ENCODE measurements at regions of chr14 and their contacts with region 1.

Region 1: GRCh38 chr14:21703357-21704326 is 30.0 kb upstream of the OR4E1 start:
- DNase-seq: no peak
- ATAC-seq: peak; percentile 94
- H3K4me3 Mint-ChIP-seq: no peak overlapping the region
- H3K27ac Mint-ChIP-seq: peak overlapping the region; percentile 52
- H3K4me1 Mint-ChIP-seq: peaks cover 19% of the 10 kb centered on the region
- H3K27me3 Mint-ChIP-seq: peaks cover 4% of the 10 kb centered on the region

Region 2: DNA sequence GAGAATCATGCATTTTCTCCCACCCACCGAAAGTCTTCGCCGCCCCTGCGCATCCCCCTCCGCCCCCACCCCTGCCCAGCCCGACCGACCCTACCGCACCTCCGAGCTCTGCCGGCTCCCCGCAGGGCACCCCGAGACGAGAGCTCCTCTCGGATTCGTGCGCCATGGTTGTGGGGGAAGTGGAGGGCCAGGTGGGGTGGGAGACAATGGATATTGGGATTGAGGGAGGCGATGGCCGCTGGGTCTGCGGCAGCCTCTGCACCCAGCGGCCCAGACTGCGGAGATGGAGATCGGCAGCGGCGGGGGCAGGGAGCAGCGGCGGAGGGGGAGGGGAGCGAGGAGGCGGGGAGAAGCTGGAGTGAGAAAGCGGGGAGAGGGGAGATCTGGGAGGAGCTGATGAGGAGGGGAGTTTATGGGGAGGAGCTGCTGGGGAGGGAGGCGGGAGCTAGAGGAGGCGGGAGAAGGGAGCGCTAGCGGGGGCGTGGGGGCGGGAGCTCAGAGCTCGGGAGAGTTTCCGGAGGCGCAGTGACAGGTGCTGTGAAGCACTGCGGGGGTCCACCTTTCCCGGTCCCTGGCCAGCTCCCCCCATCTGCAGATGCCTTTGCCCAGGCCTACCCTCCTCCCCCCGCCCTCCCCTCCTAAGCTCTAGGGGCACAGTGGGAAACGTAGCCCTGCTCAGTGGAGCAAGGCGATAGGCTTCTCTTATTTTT is 177.5 kb before region 1 on chr14 and contains the start of gene SALL2:
- CTCF ChIA-PET with region 1: no interaction called
- POLR2A ChIA-PET with region 1: no interaction called
- intact Hi-C with region 1: no loop called
- DNase-seq: peak; percentile 87
- ATAC-seq: peak; percentile 87
- H3K4me3 Mint-ChIP-seq: peak within 1 kb of the TSS; percentile 71
- H3K27ac Mint-ChIP-seq: peak within 1 kb of the TSS; percentile 72
- H3K4me1 Mint-ChIP-seq: peaks cover 16% of the 10 kb centered on the region
- H3K27me3 Mint-ChIP-seq: no peaks in the 10 kb centered on the region
- total RNA-seq, gene SALL2: 5.5 to 6.3 TPM

Region 3: DNA sequence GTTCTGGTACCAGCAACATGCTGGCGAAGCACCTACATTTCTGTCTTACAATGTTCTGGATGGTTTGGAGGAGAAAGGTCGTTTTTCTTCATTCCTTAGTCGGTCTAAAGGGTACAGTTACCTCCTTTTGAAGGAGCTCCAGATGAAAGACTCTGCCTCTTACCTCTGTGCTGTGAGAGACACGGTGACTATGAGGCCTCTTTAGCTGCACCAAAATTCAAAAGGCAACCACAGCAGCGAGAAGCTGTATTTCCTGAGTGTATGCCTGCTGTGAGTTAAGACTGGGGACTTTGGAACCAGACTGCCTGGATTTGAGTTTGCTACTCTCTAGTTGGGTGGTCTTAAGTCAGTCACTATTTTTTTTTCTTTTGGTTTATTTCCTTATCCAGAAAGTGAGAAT is 60.2 kb before region 1 on chr14:
- CTCF ChIA-PET with region 1: no interaction called
- POLR2A ChIA-PET with region 1: no interaction called
- intact Hi-C with region 1: loop called in 1 of 2 experiments (anchors 5 kb)
- DNase-seq: no peak
- ATAC-seq: no peak
- H3K4me3 Mint-ChIP-seq: peak overlapping the region; percentile 48
- H3K27ac Mint-ChIP-seq: no peak overlapping the region
- H3K4me1 Mint-ChIP-seq: peaks cover 2% of the 10 kb centered on the region
- H3K27me3 Mint-ChIP-seq: peaks cover 4% of the 10 kb centered on the region

Measured in activated CD4-positive, alpha-beta T cell treated with anti-CD3 and anti-CD28 coated beads for 36 hours (primary cell).